PC-9 (cell line): ENCODE measurements at regions of chr1 and their contacts with region 1.

Region 1: DNA sequence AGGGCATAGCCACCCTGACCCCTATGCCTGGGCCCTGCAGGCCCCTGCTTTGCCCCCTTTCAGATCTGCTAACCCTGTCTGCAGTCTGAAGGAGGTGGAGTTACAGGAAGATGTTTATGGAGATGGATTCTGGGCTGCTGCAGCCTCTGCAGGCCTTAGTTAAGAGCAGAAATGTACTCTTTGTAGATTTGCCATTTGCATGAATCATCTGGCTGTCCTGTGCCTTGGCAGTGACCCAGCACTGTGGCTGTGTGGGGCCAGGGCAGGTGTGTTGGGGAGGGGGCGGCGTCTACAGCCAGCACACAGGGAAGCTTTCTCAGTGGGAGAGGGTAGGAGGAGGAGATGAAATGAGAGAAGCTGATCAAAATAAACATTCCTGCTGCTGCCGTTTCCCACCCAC is 867.3 kb downstream of the PLA2G4A start:
- DNase-seq: no peak
- H3K4me3 ChIP-seq: no peak overlapping the region
- H3K27ac ChIP-seq: no peak overlapping the region
- H3K4me1 ChIP-seq: no peaks in the 10 kb centered on the region
- H3K27me3 ChIP-seq: no peaks in the 10 kb centered on the region
- CTCF ChIP-seq: no peak

Region 2: GRCh38 chr1:187842396-187843165 is 146.5 kb after region 1 on chr1:
- CTCF ChIA-PET with region 1: no interaction called
- POLR2A ChIA-PET with region 1: no interaction called
- intact Hi-C with region 1: no loop called
- DNase-seq: no peak
- H3K4me3 ChIP-seq: no peak overlapping the region
- H3K27ac ChIP-seq: no peak overlapping the region
- H3K4me1 ChIP-seq: no peaks in the 10 kb centered on the region
- H3K27me3 ChIP-seq: no peaks in the 10 kb centered on the region
- CTCF ChIP-seq: no peak

Region 3: GRCh38 chr1:187854457-187854856 is 158.4 kb after region 1 on chr1:
- CTCF ChIA-PET with region 1: no interaction called
- POLR2A ChIA-PET with region 1: no interaction called
- intact Hi-C with region 1: no loop called
- DNase-seq: no peak
- H3K4me3 ChIP-seq: no peak overlapping the region
- H3K27ac ChIP-seq: no peak overlapping the region
- H3K4me1 ChIP-seq: no peaks in the 10 kb centered on the region
- H3K27me3 ChIP-seq: no peaks in the 10 kb centered on the region
- CTCF ChIP-seq: no peak

Region 4: DNA sequence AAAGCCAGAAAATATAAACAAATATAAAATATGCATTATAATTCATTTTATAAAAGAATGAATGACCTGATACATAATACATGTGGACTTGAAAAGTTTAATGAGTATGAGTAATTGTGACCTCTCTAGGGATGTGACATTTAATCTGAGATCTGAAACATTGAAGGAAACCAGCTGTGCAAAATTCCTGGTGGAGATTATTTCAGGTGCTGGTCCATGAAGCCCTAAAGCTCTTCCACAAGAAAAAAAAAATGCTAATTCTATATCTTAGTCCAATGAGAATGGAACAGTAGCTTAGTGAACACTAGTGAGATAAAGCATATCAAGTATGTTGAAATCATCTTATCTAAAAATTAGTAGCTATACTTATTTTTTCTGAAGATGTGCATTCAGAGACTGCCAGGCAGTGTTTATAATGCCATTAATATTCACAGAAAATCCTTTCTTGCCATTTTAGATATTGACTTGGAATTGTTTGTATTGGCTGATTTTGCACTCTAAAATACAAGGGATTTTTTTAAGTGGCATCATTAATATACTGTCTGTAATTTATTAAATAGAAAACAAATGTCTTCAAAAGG is 618.6 kb after region 1 on chr1:
- CTCF ChIA-PET with region 1: no interaction called
- POLR2A ChIA-PET with region 1: no interaction called
- intact Hi-C with region 1: no loop called
- DNase-seq: no peak
- H3K4me3 ChIP-seq: no peak overlapping the region
- H3K27ac ChIP-seq: no peak overlapping the region
- H3K4me1 ChIP-seq: no peaks in the 10 kb centered on the region
- H3K27me3 ChIP-seq: no peaks in the 10 kb centered on the region
- CTCF ChIP-seq: no peak

Region 5: DNA sequence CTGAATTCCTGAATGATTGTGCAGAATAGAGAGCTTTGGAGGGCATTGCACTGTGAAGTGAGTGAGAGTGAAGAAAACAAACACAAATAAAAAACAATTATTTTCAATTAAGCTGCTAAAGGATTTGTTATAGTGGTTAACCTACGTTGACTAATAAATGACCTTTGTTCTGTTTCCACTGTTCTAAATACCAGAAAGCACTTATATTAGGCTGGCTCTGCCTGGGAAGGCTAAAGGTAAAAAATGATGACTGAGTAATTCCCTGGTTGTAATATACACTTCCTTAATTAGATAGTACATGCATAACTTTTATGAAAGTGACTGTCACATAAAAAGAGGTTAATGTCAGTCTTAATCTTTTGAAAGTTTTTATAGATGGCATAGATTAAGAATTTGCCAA is 793.6 kb after region 1 on chr1:
- CTCF ChIA-PET with region 1: no interaction called
- POLR2A ChIA-PET with region 1: interaction called, 10 read pairs
- intact Hi-C with region 1: no loop called
- DNase-seq: peak in 1 of 2 experiments; percentile 33
- H3K4me3 ChIP-seq: no peak overlapping the region
- H3K27ac ChIP-seq: peak overlapping the region; percentile 7; the same call in 1 of the 2 replicates
- H3K4me1 ChIP-seq: peaks cover 15% of the 10 kb centered on the region
- H3K27me3 ChIP-seq: no peaks in the 10 kb centered on the region
- CTCF ChIP-seq: no peak